Mammary epithelial cell (primary cell): ENCODE measurements at regions of chr3 and their contacts with region 1.

Region 1: GRCh38 chr3:81910244-81910852 is 148.9 kb upstream of the GBE1 start:
- DNase-seq: peak; percentile 24
- H3K4me3 ChIP-seq: no peak overlapping the region
- H3K27ac ChIP-seq: no peak overlapping the region
- H3K4me1 ChIP-seq: no peaks in the 10 kb centered on the region
- H3K27me3 ChIP-seq: no peaks in the 10 kb centered on the region
- CTCF ChIP-seq: peak; percentile 69 to 75

Region 2: DNA sequence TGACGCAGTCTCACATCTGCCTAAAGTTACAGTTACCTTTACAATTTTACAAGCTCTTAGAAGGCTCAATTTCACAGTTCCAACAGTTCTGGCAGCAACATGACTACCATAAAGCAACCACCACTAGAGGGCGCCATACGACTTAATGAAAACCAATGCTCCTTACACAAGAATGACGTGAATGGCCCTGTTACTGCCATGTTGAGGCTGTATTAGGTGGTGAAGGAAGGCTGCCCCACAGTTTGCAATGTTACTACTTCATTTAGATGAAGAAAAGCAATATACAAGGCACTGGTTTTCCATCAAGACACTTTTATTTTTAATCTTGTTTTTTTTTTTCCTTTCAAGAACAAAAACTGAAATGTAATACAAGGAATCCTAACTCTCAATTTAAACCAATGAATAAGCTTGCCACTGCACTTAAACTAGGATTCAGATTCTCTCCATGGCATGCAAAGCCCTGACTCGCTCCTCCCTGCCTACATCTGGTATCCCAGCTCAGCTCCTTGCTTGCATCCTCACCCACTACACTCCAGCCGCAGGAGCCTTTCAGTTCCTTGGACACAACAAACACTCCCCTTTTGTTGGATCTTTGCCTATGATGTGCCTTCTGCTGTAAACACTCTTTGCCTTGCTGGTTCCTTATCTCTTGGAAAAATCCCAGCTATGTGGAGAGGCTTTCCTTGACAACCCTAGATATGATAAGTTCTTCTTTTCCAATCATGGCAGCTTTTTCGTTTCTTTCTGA is 419.6 kb before region 1 on chr3:
- CTCF ChIA-PET with region 1: no interaction called
- dilution Hi-C with region 1: no loop called
- in situ Hi-C with region 1: no loop called
- intact Hi-C with region 1: loop called (anchors 10 kb)
- DNase-seq: peak; percentile 72
- H3K4me3 ChIP-seq: no peak overlapping the region
- H3K27ac ChIP-seq: no peak overlapping the region
- H3K4me1 ChIP-seq: no peaks in the 10 kb centered on the region
- H3K27me3 ChIP-seq: no peaks in the 10 kb centered on the region
- CTCF ChIP-seq: peak; percentile 81